Posterior vena cava (tissue), 2 donors: ENCODE measurements at regions of chr14 and their contacts with region 1.

Region 1: DNA sequence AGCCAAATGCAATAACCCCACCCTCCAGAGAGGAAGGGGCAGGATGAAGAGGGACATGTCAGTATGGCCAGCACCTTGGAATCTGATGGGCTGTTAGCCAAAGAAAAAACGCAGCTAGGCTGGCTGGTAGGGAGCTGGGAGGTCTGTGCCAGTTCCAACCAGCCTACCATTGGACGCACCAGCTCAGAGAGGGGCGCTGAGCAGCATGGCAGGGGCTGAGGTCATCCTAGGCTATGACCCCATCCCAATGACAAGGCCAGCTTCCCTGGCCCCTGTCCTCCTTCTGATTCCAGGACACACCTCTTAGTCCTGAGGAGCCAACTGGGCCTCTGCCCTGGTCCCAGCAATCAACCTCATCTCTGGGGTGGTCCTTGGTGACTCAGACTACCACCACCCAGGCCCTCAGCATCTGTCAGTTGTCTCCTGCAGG is 12.2 kb downstream of the ACTN1 start:
- DNase-seq: peak; percentile 41

Region 2: DNA sequence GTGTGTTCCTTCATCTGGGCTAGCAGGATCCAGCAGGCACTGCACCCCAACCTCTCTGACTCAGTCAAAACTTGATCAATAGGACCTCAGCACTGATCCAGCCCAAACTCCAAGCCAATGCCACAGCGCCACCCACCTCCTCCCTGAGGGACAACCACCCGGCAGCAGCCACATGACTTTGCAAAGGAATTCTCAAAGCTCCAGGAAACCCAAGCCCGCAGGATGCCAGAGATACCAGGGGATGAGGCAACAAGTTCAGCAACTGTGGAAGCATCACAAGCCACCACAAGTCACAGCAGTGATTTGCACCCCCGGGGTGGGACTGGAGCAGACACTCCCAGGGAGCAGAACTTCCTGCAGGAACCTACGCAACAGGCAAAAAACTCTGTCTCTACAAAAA is 25.1 kb before region 1 on chr14:
- intact Hi-C with region 1: no loop called
- DNase-seq: no peak

Region 3: DNA sequence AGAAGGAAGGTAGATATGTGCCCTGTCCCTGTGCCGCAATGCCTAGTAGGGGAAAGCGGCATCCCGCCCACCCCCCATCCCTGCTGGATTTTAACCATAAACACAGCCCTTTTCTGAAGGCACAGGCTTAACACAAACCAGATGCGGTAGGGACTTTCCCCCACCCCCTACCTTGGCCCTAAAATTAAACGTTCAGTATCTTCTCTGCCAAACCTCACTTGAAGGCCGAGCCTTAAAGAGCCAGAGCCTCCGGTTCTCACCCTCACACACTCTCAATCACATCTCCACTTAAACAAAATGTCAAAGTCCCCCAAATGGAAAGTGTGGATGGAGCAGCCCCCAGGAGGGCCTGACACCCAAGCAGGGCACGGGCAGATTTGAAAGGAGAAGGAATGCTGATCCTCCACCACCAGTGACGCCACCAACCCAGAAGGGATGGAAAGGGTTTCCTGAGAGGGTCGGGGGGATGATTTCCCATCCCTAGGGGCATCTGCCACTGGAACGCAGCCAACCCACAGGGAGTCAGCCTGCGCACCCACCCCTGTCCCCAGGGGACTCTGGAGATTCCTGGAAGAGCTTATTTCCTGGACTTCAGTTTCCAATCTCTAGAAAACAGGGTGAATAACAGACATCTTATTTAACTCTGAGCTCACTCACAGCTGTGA is 14.2 kb before region 1 on chr14:
- intact Hi-C with region 1: loop called in 1 of 2 experiments (anchors 1 kb)
- DNase-seq: peak; percentile 78

Region 4: GRCh38 chr14:69013943-69014775 is 47.3 kb after region 1 on chr14:
- intact Hi-C with region 1: no loop called
- DNase-seq: peak; percentile 85